Activated CD8-positive, alpha-beta T cell treated with anti-CD3 and anti-CD28 coated beads for 36 hours (primary cell): ENCODE measurements at regions of chr4 and their contacts with region 1.

Region 1: DNA sequence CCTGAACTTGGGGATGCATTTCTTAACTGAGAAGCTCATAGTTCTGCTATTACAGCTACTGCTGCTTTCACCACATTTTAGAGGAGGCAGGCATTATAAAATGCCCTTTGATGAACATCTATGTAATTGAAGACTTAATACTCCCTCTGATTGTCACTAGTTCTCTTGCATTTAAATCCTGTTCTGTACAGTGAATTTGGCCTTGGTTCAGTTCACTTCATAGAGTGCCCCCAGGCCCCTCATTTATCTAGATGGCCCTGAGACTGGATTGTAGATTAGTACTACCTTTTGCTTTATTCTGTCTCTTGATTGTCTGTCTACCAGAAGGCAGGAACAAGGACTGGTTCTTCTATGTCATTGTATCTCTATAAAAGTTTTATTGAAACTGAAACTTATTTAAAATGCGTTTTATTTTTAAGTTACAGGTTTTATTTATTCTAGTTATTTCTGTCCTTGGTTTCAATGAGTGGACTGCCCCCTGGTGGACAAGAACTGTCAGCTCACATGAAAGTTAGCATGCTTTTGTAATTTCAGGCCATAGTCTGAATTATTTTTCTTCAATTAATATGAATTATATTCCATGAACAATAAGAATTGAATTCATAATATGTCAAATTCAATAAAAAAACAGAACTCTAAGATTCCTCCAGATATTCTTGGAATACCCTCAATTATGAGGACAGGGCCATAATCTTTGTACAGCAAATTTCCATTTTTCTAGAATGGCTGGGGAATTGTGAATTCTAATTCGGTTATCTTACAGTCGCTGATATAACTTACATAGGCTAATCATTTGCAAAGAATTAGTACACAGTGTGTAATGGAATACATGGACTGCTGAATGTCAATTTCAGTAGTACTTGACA is 47.2 kb upstream of the TMEM33 start:
- DNase-seq: peak; percentile 70
- ATAC-seq: no peak
- H3K4me3 Mint-ChIP-seq: no peak overlapping the region
- H3K27ac Mint-ChIP-seq: no peak overlapping the region
- H3K4me1 Mint-ChIP-seq: no peaks in the 10 kb centered on the region
- H3K27me3 Mint-ChIP-seq: peaks cover 6% of the 10 kb centered on the region
- CTCF ChIP-seq: peak; percentile 86

Region 2: DNA sequence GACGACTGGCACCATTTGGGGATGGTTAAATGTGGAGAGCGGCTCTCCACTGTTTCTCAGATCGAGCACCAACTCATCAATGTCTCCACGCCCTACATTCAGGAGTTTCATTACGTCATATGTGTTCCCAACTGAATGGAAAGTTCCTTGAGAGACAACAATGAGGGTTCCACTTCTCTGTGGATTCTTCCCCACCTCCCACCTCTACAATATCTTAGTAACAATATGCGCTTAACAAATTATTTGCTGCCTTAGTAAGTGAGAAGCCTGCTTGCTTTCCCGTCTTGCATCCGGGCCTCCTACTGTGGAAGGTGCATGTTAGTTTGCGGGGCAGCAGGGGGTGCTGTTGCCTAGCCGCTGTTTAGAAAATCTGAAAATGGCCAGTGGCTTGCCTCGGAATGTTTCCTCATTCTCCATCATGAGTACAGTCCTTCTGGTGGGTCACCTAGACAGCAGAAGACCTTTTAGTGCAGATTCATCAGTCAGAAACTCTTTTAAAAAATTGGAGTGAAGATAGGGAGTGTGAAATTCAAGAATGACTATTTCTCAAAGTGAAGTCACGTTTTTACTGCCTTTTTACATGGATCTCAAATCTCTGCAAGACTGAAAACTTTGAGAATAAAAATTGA is 195.2 kb before region 1 on chr4:
- CTCF ChIA-PET with region 1: interaction called, 29 read pairs
- POLR2A ChIA-PET with region 1: no interaction called
- intact Hi-C with region 1: loop called (anchors 2 kb)
- DNase-seq: peak; percentile 46
- ATAC-seq: no peak
- H3K4me3 Mint-ChIP-seq: no peak overlapping the region
- H3K27ac Mint-ChIP-seq: no peak overlapping the region
- H3K4me1 Mint-ChIP-seq: no peaks in the 10 kb centered on the region
- H3K27me3 Mint-ChIP-seq: peaks cover 4% of the 10 kb centered on the region
- CTCF ChIP-seq: peak; percentile 82

Region 3: DNA sequence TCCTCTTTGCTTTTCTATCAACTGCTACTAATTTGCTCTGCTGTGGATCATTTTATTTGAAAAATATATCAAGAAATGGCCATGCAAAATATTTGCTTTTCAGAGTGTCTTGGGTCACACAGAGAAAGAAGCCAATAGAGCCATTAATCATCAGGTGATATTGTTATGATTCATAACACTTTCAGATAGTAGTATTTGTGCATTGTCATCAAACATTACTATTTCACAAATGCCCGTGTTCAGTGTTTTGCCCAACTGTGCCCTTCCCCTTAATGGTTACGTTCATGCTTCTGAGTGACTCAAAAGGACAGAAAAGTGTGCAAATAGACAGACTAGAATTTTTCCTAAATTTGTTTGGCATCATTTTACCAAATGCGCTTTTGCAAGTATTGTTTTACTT is 186.1 kb before region 1 on chr4:
- CTCF ChIA-PET with region 1: interaction called, 10 read pairs
- POLR2A ChIA-PET with region 1: no interaction called
- intact Hi-C with region 1: no loop called
- DNase-seq: no peak
- ATAC-seq: no peak
- H3K4me3 Mint-ChIP-seq: no peak overlapping the region
- H3K27ac Mint-ChIP-seq: no peak overlapping the region
- H3K4me1 Mint-ChIP-seq: no peaks in the 10 kb centered on the region
- H3K27me3 Mint-ChIP-seq: peaks cover 11% of the 10 kb centered on the region
- CTCF ChIP-seq: no peak

Region 4: GRCh38 chr4:41865306-41865980 is 22.6 kb before region 1 on chr4:
- CTCF ChIA-PET with region 1: interaction called, 13 read pairs
- POLR2A ChIA-PET with region 1: no interaction called
- intact Hi-C with region 1: no loop called
- DNase-seq: no peak
- ATAC-seq: no peak
- H3K4me3 Mint-ChIP-seq: no peak overlapping the region
- H3K27ac Mint-ChIP-seq: no peak overlapping the region
- H3K4me1 Mint-ChIP-seq: peaks cover 7% of the 10 kb centered on the region
- H3K27me3 Mint-ChIP-seq: peaks cover 56% of the 10 kb centered on the region
- CTCF ChIP-seq: no peak

Region 5: GRCh38 chr4:42282081-42282901 is 394.2 kb after region 1 on chr4:
- CTCF ChIA-PET with region 1: no interaction called
- POLR2A ChIA-PET with region 1: no interaction called
- intact Hi-C with region 1: no loop called
- DNase-seq: peak; percentile 52
- ATAC-seq: peak; percentile 68
- H3K4me3 Mint-ChIP-seq: no peak overlapping the region
- H3K27ac Mint-ChIP-seq: no peak overlapping the region
- H3K4me1 Mint-ChIP-seq: peaks cover 8% of the 10 kb centered on the region
- H3K27me3 Mint-ChIP-seq: peaks cover 22% of the 10 kb centered on the region
- CTCF ChIP-seq: peak; percentile 68